ENCODE measurements at regions of chr7 and their contacts with region 1.

Region 1: GRCh38 chr7:117014673-117015133 is 61.4 kb downstream of the ST7 start:
- DNase-seq: peak; percentile 79 to 97 (median 89)
- ATAC-seq: peak; percentile 88
- H3K4me3 ChIP-seq: peak overlapping the region; percentile 40
- H3K27ac ChIP-seq: peak overlapping the region; percentile 85
- H3K4me1 ChIP-seq: peaks cover 13 to 72% of the 10 kb centered on the region in 2 experiments
- H3K27me3 ChIP-seq: no peaks in the 10 kb centered on the region
- CTCF ChIP-seq: no peak
- EP300 ChIP-seq: peak; percentile 95
- POLR2A ChIP-seq: peak; percentile 81
- RAD21 ChIP-seq: peak in 1 of 2 experiments; percentile 17; a peak in 1 of 4 replicates

Region 2: DNA sequence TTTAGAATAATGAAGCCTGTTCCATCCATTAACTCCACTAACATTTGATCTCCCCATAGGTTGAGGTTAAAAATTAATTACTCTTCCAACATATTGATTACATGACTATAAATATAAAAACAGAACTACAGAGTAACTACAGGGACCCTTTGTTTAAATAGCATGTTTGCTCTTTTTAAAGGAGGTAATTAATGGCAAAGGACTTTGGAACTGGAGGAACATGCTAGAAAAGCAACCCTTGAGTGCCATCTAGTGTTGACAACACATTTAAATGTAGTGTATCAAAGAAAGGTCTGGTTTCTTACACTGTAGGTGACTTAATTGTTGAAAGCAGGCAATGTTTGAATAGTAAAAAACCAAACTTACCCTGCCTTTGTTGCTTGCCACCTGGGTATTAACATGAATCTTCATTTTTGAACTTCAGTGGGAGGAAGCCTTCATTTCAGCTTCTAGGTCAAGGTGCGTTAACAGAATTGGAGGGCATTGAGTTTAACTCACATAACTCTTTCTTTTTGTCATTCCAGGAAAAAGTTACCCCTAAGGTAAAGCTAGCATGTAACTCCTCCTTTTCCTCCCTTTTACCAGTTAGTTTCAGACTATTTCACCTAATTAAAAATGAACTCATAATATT is 205.0 kb before region 1 on chr7:
- CTCF ChIA-PET with region 1: no interaction called
- POLR2A ChIA-PET with region 1: no interaction called
- in situ Hi-C with region 1: no loop called
- intact Hi-C with region 1: no loop called
- DNase-seq: peak; percentile 41 to 82 (median 54)
- ATAC-seq: peak; percentile 96
- H3K4me3 ChIP-seq: no peak overlapping the region
- H3K27ac ChIP-seq: no peak overlapping the region
- H3K4me1 ChIP-seq: no peaks in the 10 kb centered on the region
- H3K27me3 ChIP-seq: peaks cover 9 to 19% of the 10 kb centered on the region in 2 experiments; a peak in 4 of 5 replicates
- CTCF ChIP-seq: peak; percentile 65 to 89 (median 71)
- EP300 ChIP-seq: no peak
- POLR2A ChIP-seq: no peak
- RAD21 ChIP-seq: peak; percentile 92 to 97

Region 3: GRCh38 chr7:116862234-116862950 is 152.3 kb before region 1 on chr7 and contains the start of gene CAPZA2:
- CTCF ChIA-PET with region 1: no interaction called
- POLR2A ChIA-PET with region 1: no interaction called
- in situ Hi-C with region 1: no loop called
- intact Hi-C with region 1: loop called (anchors 5 kb)
- DNase-seq: peak; percentile 98 to 100 (median 100)
- ATAC-seq: peak; percentile 88
- H3K4me3 ChIP-seq: peak within 1 kb of the TSS; percentile 64
- H3K27ac ChIP-seq: peak within 1 kb of the TSS; percentile 87
- H3K4me1 ChIP-seq: peaks cover 6 to 20% of the 10 kb centered on the region in 2 experiments
- H3K27me3 ChIP-seq: no peaks in the 10 kb centered on the region; a peak in 1 of 5 replicates
- CTCF ChIP-seq: peak in 2 of 3 experiments; percentile 32 to 46; a peak in 3 of 6 replicates
- EP300 ChIP-seq: peak; percentile 19; the same call in 1 of the 2 replicates
- POLR2A ChIP-seq: peak; percentile 95
- RAD21 ChIP-seq: no peak
- polyA plus RNA-seq, gene CAPZA2: 352 to 524 TPM

Region 4: DNA sequence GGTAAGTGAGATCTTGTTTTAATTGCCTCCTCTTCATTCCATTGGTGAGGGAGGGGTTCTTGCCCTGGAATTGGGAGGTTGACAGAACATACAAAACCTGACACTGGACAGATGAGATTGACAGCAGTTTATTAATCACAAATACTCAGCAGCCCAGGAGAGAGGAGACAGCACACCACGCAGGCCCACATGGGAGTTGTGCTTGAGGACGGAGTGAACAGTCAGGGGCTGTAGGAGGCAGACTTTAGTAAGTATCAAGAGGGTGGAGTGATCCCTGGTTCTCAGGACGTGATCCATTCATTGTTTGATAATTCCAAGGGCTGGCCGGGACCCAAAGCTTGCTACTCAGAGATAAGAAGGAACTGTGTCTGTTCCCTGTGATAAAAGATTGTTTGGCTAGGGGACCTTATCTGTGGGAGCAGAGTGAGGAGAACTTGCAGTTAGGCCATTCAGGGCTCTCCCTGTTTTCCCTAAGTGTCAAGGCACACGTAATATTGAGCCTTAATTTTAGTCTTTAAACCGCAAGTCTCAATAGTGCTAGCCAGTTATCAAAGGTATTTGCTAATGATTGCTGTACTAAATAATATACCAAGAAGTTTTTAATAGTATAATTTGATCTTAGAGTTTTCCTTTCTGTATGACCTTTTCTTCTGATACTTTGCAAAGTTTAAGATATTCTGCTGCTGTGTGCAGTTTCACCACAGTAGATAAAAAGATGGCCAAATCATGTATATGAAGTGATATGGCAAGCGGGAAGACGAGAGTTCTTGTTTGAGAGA is 137.8 kb before region 1 on chr7:
- CTCF ChIA-PET with region 1: no interaction called
- POLR2A ChIA-PET with region 1: no interaction called
- in situ Hi-C with region 1: no loop called
- intact Hi-C with region 1: loop called (anchors 2 kb)
- DNase-seq: peak; percentile 88 to 99 (median 92)
- ATAC-seq: peak; percentile 99
- H3K4me3 ChIP-seq: no peak overlapping the region; the same call in 1 of the 2 replicates
- H3K27ac ChIP-seq: peak overlapping the region; percentile 64
- H3K4me1 ChIP-seq: peaks cover 14 to 34% of the 10 kb centered on the region in 2 experiments
- H3K27me3 ChIP-seq: no peaks in the 10 kb centered on the region
- CTCF ChIP-seq: peak; percentile 68 to 83 (median 80)
- EP300 ChIP-seq: peak; percentile 100
- POLR2A ChIP-seq: no peak
- RAD21 ChIP-seq: peak; percentile 42 to 70; a peak in 3 of 4 replicates

Region 5: DNA sequence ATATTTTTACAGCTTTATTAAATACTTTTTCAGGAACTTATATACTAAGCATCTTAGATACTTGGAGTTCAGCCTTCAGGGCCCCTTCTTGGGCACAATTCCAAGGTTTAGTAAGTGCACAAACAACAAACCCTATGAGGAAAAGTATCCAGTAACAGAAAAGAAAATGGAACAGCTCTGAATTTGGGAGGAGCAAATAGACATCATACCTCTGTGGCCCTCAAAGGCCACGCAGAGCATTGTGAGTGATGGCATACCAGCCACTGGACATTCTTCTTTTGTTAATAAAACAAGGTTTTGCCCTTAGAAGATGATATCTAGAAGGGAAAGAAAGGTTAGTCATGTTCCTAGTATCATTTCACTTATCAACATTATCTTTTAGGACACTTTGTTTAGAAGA is 15.4 kb before region 1 on chr7:
- CTCF ChIA-PET with region 1: no interaction called
- POLR2A ChIA-PET with region 1: interaction called, 17 read pairs
- in situ Hi-C with region 1: no loop called
- intact Hi-C with region 1: no loop called
- DNase-seq: peak in 1 of 4 experiments; percentile 7
- ATAC-seq: no peak
- H3K4me3 ChIP-seq: no peak overlapping the region
- H3K27ac ChIP-seq: no peak overlapping the region
- H3K4me1 ChIP-seq: no peaks in the 10 kb centered on the region; a peak in 1 of 5 replicates
- H3K27me3 ChIP-seq: no peaks in the 10 kb centered on the region
- CTCF ChIP-seq: no peak
- EP300 ChIP-seq: no peak
- POLR2A ChIP-seq: no peak
- RAD21 ChIP-seq: no peak

Region 6: GRCh38 chr7:117230276-117231046 is 215.8 kb after region 1 on chr7:
- CTCF ChIA-PET with region 1: no interaction called
- POLR2A ChIA-PET with region 1: no interaction called
- in situ Hi-C with region 1: no loop called
- intact Hi-C with region 1: no loop called
- DNase-seq: peak in 1 of 4 experiments; percentile 24
- ATAC-seq: peak; percentile 40
- H3K4me3 ChIP-seq: no peak overlapping the region
- H3K27ac ChIP-seq: no peak overlapping the region
- H3K4me1 ChIP-seq: peaks cover 0 to 16% of the 10 kb centered on the region in 2 experiments; a peak in 3 of 5 replicates
- H3K27me3 ChIP-seq: no peaks in the 10 kb centered on the region
- CTCF ChIP-seq: no peak
- EP300 ChIP-seq: no peak
- POLR2A ChIP-seq: 0 out of 2 replicates have a peak, but pooled peaks have one; percentile 22
- RAD21 ChIP-seq: no peak

Measured in K562 (cell line).